HAP-1 (cell line): ENCODE measurements at regions of chrX and their contacts with region 1.

Region 1: DNA sequence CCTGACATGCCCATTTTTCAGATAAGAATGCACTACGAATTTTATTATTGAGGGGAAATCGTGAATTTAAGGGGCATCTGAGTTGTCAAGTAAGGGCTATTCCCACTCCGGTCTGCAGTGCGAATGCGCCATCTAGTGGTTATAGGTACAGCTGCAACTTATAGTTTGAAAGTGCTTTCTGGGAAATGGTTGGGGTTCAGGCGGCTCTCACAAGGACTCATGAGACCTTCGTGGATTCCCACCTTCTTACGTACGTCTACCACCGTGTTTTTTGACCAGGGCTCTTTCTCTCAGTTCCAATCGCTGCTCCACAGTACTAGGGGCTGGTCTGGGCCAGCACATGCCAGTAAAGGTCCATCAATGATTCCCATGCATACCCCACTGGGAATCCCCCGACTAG is 12.3 kb downstream of the MSL3 start:
- DNase-seq: peak; percentile 62 to 76
- H3K4me3 ChIP-seq: no peak overlapping the region
- H3K4me1 ChIP-seq: no peaks in the 10 kb centered on the region
- H3K27me3 ChIP-seq: no peaks in the 10 kb centered on the region

Region 2: DNA sequence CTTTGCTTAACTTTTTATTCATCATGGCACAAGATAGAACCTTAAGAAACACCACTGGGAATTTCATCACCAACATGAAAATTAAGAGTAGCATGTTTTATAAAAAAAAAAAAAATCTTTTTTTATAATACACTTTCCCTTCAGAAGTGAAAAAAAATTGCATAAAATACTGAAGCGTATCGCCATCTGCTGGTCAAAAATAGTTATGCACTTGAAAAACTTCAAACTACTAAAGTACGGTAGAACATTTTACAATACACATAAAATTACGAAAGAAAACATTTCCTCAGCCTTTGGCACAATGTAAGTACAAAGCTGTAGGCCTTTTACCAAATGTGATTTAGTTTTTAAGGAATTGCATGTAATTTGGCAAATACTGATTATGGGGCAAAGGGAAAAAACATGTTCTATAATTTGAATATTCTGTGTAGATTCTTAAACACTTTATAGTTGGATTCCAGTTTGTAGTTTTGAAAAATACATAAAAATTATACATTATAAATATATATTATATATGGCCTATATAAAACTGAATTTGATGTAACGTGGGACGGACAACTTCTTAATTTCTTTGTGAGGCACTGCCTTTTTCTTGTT is 632.7 kb before region 1 on chrX:
- in situ Hi-C with region 1: loop called (anchors 10 kb)
- DNase-seq: peak; percentile 16 to 27
- H3K4me3 ChIP-seq: no peak overlapping the region
- H3K4me1 ChIP-seq: peaks cover 9% of the 10 kb centered on the region
- H3K27me3 ChIP-seq: no peaks in the 10 kb centered on the region

Region 3: GRCh38 chrX:11196476-11196875 is 573.8 kb before region 1 on chrX:
- in situ Hi-C with region 1: no loop called
- DNase-seq: no peak
- H3K4me3 ChIP-seq: no peak overlapping the region
- H3K4me1 ChIP-seq: no peaks in the 10 kb centered on the region
- H3K27me3 ChIP-seq: no peaks in the 10 kb centered on the region

Region 4: DNA sequence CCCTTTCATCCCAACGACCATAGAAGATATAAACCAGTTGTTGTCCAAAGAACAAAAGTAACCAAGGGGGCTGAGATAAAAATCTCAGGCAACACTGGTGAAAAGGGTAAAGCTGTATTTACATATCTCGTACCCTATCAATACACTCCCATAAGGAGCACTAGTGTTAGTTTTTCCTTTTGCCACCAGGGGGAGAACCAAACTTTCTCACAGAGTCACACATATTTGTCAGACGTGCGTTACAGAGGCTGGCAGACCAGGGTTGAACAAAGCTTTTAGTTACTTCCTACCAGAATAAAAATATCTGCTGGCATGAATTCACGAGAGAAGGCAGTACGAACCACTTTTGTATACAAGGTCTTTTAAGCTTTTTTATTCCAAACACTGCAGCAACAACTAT is 388.9 kb before region 1 on chrX:
- in situ Hi-C with region 1: loop called (anchors 10 kb)
- DNase-seq: peak; percentile 74 to 82
- H3K4me3 ChIP-seq: no peak overlapping the region
- H3K4me1 ChIP-seq: peaks cover 5% of the 10 kb centered on the region; the same call in 1 of the 2 replicates
- H3K27me3 ChIP-seq: no peaks in the 10 kb centered on the region

Region 5: DNA sequence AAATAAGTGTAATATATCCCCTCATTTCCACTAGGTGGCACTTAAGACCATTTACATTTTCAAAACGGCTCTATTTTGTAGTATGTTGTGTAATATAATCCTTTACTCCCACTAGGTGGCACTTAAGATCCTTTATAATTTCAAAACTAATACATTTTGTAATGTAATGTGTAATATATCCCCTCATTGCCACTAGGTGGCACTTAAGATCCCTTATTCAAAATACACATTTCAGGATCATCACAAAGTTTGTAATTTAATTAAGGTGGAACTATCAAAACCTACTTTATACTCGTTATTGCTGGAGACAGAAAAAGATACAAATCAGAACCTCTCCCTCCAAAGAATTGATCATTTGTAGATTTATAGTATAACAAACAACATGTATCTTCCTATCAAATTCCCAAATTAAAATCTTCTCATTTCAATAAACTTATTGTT is 237.1 kb before region 1 on chrX:
- in situ Hi-C with region 1: loop called (anchors 5 kb)
- DNase-seq: peak in 1 of 2 experiments; percentile 95
- H3K4me3 ChIP-seq: no peak overlapping the region
- H3K4me1 ChIP-seq: no peaks in the 10 kb centered on the region
- H3K27me3 ChIP-seq: no peaks in the 10 kb centered on the region

Region 6: GRCh38 chrX:11597479-11597878 is 172.8 kb before region 1 on chrX:
- in situ Hi-C with region 1: no loop called
- DNase-seq: no peak
- H3K4me3 ChIP-seq: no peak overlapping the region
- H3K4me1 ChIP-seq: no peaks in the 10 kb centered on the region
- H3K27me3 ChIP-seq: no peaks in the 10 kb centered on the region

Region 7: GRCh38 chrX:11890836-11891514 is 120.7 kb after region 1 on chrX:
- in situ Hi-C with region 1: no loop called
- DNase-seq: no peak
- H3K4me3 ChIP-seq: no peak overlapping the region
- H3K4me1 ChIP-seq: no peaks in the 10 kb centered on the region
- H3K27me3 ChIP-seq: no peaks in the 10 kb centered on the region

Region 8: DNA sequence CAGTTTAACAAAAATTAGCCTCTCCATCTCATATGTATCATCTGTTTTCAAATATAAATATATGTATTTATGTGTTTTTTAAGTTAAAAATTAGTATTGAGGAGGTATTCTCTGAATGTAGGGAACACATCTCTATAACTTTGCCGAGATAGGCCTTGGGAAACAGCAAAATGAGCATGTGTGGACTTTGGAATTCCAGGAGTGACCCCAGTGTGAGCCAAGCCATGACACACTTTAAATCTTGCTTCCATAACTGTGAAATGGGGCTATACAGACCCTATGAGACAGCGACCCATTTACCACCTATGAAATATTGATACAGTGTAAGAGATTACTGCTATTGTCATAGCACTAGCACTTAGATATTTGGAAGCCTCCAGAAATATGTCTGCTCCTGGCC is 426.7 kb after region 1 on chrX:
- in situ Hi-C with region 1: no loop called
- DNase-seq: no peak
- H3K4me3 ChIP-seq: no peak overlapping the region
- H3K4me1 ChIP-seq: no peaks in the 10 kb centered on the region
- H3K27me3 ChIP-seq: peaks cover 23% of the 10 kb centered on the region